ENCODE measurements at regions of chr6 and their contacts with region 1.

Region 1: DNA sequence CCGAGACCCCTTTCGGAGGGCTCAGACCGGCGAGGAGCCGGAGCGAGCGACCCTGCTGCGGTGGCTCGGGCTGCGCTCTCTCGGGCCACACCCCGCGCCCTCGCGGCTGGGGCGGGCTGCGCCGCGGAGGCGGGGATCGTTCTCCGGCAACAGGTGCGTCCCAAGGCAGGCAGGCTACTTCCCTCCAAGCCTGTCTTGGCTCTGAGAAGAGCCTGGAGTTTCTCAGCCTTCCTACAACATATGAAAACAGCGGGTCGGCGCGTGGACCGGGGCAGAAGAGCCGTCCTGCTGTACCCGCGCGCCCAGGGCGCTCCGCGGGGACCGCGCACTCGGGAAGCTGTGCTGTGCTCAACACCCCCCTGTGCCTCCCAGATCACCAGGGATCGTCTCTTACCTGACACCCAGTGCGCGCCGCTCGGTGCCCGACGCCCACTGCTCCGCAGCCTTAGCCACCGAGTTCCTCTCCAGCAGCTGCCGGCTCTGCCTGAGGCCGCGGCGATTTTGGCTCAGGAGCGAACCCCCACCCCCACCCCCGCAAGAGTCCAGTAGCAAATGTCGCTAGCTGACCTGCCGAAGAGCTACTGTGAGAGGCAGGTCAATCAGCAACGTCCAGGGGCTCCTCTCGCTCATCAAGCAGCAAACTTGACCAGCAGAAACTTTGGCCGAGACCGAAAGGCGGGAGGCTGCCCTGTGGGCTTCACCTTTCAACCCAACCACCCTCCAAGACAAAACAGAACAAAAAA is 3.7 kb upstream of the OLIG3 start:
- DNase-seq: peak in 1 of 2 experiments; percentile 77
- H3K4me3 ChIP-seq: peak overlapping the region; percentile 38 to 62 (median 55)
- H3K27ac ChIP-seq: no peak overlapping the region
- H3K4me1 ChIP-seq: peaks cover 3 to 38% (median 16%) of the 10 kb centered on the region in 4 experiments
- H3K27me3 ChIP-seq: peaks cover 46 to 74% (median 65%) of the 10 kb centered on the region in 4 experiments
- CTCF ChIP-seq: no peak
- EP300 ChIP-seq: no peak
- POLR2A ChIP-seq: no peak
- RAD21 ChIP-seq: no peak

Region 2: DNA sequence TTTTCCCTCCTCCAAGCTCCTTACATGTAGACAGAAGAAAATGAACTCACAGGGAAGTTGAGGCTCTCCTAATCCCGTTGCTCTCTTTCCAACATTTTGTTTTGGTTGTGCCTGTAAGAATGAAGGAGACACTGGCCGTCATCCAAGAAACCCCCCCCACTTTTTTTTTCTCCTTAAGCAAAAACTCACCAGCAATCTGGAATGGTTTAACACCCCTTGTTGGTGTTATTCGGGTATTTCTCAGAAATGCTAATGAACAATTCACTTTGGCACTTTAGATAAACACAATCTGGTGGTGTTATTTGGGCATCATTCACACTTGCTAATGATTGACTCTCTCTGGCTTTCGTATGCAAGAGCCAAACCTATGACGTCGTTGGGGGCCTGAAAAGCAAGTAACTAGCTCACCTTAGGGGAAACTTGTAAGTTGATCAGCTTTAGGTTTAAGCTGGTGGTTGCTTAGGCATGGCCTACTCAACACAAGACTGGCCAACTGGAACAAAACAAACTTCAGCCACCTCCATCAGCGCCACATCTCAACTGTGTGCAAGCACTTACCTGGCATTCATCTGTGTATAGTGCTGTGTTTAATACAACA is 20.6 kb after region 1 on chr6:
- CTCF ChIA-PET with region 1: interaction called, 13 read pairs
- POLR2A ChIA-PET with region 1: interaction called, 3 read pairs
- DNase-seq: no peak
- H3K4me3 ChIP-seq: peak overlapping the region in 1 of 4 experiments; percentile 15; a peak in 1 of 8 replicates
- H3K27ac ChIP-seq: no peak overlapping the region
- H3K4me1 ChIP-seq: peaks cover 4 to 20% (median 14%) of the 10 kb centered on the region in 4 experiments; a peak in 6 of 7 replicates
- H3K27me3 ChIP-seq: peaks cover 0 to 3% (median 0%) of the 10 kb centered on the region in 4 experiments; a peak in 3 of 7 replicates
- CTCF ChIP-seq: no peak
- EP300 ChIP-seq: no peak
- POLR2A ChIP-seq: no peak
- RAD21 ChIP-seq: no peak

Measured in H1 (cell line).